ENCODE measurements at regions of chr22 and their contacts with region 1.

Region 1: DNA sequence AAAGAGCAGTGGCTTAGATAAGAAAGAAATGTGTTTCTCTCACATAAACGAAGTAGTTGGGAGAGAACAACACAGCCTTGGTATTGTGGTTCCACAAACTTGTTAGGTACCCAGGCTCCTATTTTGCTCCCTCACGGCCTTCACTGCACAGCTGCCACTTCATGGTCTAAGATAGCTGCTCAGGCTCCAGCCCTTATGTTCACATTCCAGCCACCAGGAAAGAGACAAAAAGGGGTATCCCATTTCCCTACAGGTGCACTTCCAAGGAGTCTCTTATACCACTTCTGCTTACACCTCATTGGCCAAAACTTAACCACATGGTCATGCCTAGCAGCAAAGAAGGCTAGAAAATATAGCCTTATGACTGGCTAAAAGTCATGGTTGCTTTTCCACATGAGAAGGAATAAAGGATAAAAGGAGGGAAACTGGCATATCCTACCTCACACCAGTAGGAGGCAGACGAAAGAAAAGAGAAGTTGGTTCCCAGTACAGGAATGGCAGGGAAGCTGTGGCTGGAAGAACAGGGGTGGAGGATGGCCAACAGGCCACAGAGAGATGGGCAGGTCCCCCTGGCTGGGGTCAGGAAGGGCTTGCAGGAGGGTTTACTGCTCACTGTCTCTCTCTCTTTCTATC is 5.4 kb upstream of the HDHD5 start:
- DNase-seq: no peak

Region 2: GRCh38 chr22:16953206-16954059 is 211.1 kb before region 1 on chr22:
- intact Hi-C with region 1: loop called (anchors 5 kb)
- DNase-seq: no peak

Region 3: DNA sequence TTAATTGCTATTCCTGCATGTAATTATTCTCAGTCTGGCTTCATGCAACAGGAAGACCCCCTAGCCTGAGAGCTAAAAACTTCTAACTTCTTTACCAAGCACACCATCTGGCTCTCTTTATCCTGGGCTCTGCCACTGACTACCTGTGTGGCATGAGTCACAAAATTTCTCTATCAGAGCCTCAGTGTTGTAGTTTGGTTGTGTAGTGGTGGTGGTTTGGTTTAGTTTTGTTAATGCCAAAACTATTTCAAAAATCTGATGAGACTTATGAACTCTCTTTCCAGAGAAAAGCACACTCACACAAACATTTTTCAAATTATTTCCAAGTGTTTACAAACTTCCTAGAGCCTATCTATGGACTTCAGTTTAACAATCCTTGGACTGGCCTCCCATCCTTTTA is 87.3 kb before region 1 on chr22:
- intact Hi-C with region 1: no loop called
- DNase-seq: no peak

Measured in cardiac septum (tissue), 1 donor.